ENCODE measurements at regions of chr2 and their contacts with region 1.

Region 1: DNA sequence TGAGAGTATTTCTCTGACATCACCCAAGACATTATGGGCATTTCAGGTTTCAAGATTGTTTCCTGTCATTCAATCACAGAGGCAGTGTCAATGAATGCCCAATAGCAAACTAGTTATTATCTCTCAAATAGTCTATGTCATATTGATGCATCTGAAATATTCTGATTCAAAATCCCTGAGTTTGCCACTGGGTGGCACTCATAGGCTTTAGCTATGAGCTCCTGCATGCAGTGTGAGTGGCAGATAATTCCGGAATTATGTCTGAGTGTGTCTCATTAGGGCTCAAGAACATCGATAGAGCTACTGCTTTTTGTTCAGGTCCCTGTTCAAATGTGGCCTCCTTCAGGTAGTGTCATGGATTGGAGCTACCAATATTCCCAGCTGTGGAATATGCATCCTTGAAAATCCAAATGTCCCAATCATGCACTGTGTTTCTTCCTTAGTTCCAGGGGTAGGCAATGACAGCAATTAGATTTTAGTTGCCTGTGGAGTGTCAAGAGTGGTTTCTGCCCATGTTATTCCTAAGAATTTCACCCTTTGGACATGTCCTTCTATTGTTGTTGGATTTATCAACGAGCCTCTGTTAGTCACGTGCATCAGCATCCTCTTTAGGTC is 7.8 kb upstream of the OR6B3 start:
- DNase-seq: no peak
- H3K4me3 Mint-ChIP-seq: no peak overlapping the region
- H3K27ac Mint-ChIP-seq: no peak overlapping the region
- H3K4me1 Mint-ChIP-seq: no peaks in the 10 kb centered on the region
- H3K27me3 Mint-ChIP-seq: peaks cover 34% of the 10 kb centered on the region

Region 2: DNA sequence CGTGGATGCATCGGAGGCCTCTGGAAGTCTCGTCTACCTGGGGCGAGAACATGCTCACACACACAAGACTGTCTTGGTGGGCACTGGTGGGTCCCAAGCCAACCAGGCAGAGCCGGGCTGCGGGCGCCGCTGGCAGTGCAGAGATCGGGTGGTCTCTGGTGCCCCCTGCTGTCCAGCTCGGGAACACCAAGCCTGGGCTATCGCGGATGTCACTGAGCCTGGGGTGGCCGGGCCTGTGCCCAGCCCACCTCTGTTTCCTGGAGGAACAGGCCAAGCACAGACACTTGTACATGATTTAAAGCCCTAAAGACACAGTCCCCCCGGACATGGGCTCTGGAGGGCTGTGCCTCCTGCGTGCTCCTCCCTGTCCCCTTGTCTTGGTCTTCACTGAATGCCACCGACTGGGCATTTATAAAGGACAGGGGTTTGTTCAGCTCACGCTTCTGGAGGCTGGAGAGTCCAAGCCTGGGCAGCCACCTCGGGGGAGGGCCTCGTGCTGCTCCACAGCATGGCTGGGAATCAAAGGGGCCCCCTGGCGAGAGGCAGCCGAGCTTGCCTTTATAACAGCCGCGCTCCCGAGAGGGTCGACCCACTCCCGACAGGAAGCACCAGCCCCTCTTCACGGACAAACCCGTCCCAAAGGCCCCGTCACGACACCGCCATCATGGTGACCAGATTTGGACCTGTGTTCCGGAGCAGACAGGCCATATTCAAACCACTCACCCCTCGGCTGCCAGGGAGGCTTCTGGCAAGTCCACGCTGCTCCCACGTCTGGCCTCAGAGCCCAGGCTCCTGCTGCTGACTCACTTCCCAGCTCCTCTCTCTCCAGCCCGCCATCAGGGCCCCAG is 82.9 kb after region 1 on chr2:
- intact Hi-C with region 1: loop called (anchors 1 kb)
- DNase-seq: peak; percentile 68
- H3K4me3 Mint-ChIP-seq: no peak overlapping the region
- H3K27ac Mint-ChIP-seq: no peak overlapping the region
- H3K4me1 Mint-ChIP-seq: no peaks in the 10 kb centered on the region
- H3K27me3 Mint-ChIP-seq: peaks cover 9% of the 10 kb centered on the region

Measured in activated T-helper 1 cell treated with anti-CD3 and anti-CD28 coated beads, Interleukin-12 subunit alpha, Interleukin-12 subunit beta, Interleukin-2, Interleukin-4 antibody, amounts not matched to agents 30 ng/mL and 10 ng/mL and 1 ng/mL, durations not matched to agents 14 hours and 24 hours and 36 hours (primary cell).